MCF 10A (cell line): ENCODE measurements at regions of chr1 and their contacts with region 1.

Region 1: GRCh38 chr1:113928941-113929749 is at the start of gene HIPK1:
- DNase-seq: peak; percentile 89
- H3K4me3 Mint-ChIP-seq: peak within 1 kb of the TSS; percentile 95
- H3K27ac Mint-ChIP-seq: peak within 1 kb of the TSS; percentile 97
- H3K4me1 Mint-ChIP-seq: peaks cover 47% of the 10 kb centered on the region
- H3K27me3 Mint-ChIP-seq: no peaks in the 10 kb centered on the region
- CTCF ChIP-seq: no peak
- total RNA-seq, gene HIPK1: 46.7 and 50.2 TPM in 2 replicates

Region 2: GRCh38 chr1:113811888-113812660 is 117.1 kb before region 1 on chr1 and contains the start of gene RSBN1:
- CTCF ChIA-PET with region 1: interaction called, 3 read pairs
- POLR2A ChIA-PET with region 1: interaction called, 49 read pairs
- intact Hi-C with region 1: no loop called
- DNase-seq: peak; percentile 99
- H3K4me3 Mint-ChIP-seq: peak within 1 kb of the TSS; percentile 94
- H3K27ac Mint-ChIP-seq: peak within 1 kb of the TSS; percentile 88
- H3K4me1 Mint-ChIP-seq: peaks cover 22% of the 10 kb centered on the region
- H3K27me3 Mint-ChIP-seq: no peaks in the 10 kb centered on the region
- CTCF ChIP-seq: no peak
- total RNA-seq, gene RSBN1: 11.8 and 15.7 TPM in 2 replicates

Region 3: DNA sequence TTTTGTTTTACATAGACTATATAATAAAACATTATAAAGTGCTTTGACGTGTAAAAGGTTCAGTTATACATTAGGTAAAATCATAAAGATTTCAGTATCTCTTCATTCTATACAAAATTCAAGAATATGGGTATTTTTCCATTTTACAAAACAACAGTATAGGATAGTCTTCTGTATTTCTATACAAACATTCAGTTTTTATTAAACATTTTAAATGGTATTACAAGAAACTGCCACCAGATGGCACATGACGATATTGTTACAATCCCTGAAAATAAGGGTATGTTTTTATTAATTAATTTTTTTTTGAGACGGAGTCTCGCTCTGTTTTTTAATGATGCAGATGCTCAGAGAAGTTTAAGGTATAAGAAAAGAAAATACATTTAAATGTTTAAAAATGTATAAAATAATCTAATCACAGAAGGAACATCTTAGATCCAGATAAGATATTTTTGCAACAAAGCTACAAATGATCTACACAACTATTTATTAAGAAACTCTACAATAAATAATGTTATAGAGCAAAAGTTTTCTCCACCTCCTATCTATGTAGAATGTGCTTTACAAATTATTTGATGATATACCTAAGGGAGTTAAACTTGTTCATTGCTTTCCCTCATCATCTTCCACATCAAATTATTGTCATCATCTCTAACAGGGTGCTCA is 93.4 kb before region 1 on chr1:
- CTCF ChIA-PET with region 1: interaction called, 22 read pairs
- POLR2A ChIA-PET with region 1: interaction called, 33 read pairs
- intact Hi-C with region 1: no loop called
- DNase-seq: peak; percentile 72
- H3K4me3 Mint-ChIP-seq: no peak overlapping the region
- H3K27ac Mint-ChIP-seq: no peak overlapping the region
- H3K4me1 Mint-ChIP-seq: no peaks in the 10 kb centered on the region
- H3K27me3 Mint-ChIP-seq: no peaks in the 10 kb centered on the region
- CTCF ChIP-seq: peak; percentile 50

Region 4: DNA sequence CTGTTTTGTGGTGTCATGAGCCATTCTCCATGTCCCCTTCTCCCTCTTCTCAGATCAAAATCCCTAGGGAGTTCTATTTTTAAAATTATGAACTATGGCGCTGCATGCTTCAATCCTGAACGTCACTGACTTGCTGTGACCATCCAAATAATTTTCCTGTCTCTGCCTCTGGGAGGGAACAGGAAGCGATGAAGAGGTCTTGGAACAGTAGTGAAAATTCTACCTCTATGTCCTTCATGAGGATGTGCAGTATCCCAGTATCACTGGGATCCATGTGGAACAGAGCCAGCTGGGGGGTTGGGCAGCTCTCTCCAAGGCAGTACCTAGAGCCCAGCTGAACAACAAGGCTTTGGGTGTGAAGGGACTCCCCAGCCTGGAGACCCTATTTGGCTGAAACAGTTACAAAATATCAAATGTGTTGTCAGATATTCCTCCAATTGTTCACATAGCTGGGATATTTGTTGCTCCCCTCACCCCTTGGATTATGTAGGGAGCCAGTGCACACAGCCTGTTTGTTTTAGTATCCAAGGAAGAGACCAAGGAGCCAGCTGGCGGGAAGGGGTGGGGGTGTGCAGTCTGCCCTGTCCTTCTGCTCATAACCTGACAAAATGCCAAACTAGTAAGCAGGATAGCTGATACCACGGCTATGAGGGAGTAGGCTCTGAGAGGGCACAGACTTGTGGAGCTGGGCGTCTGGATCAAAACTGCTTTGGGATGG is 16.4 kb before region 1 on chr1:
- CTCF ChIA-PET with region 1: interaction called, 8 read pairs
- POLR2A ChIA-PET with region 1: interaction called, 228 read pairs
- intact Hi-C with region 1: no loop called
- DNase-seq: no peak
- H3K4me3 Mint-ChIP-seq: no peak overlapping the region
- H3K27ac Mint-ChIP-seq: no peak overlapping the region
- H3K4me1 Mint-ChIP-seq: peaks cover 6% of the 10 kb centered on the region
- H3K27me3 Mint-ChIP-seq: no peaks in the 10 kb centered on the region
- CTCF ChIP-seq: no peak

Region 5: DNA sequence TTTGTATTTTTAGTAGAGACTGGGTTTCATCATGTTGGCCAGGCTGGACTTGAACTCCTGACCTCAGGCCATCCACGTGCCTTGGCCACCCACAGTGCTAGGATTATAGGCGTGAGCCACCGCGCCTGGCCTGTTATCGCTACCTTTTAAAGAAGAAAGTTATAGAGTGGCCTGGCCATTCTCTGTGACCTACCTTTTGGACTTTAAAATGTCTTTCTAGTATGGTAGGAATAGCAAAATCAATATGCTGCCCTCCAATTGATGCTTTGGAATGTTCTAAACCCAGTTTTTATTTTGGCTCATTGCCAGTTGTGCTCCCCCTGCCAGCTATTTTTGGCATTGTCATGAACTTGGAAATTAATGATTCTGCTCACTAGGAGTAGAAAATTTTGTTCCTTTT is 19.9 kb after region 1 on chr1:
- CTCF ChIA-PET with region 1: interaction called, 16 read pairs
- POLR2A ChIA-PET with region 1: interaction called, 7 read pairs
- intact Hi-C with region 1: no loop called
- DNase-seq: no peak
- H3K4me3 Mint-ChIP-seq: no peak overlapping the region
- H3K27ac Mint-ChIP-seq: no peak overlapping the region
- H3K4me1 Mint-ChIP-seq: peaks cover 5% of the 10 kb centered on the region
- H3K27me3 Mint-ChIP-seq: no peaks in the 10 kb centered on the region
- CTCF ChIP-seq: peak; percentile 33